Pancreas (tissue), 10 donors: ENCODE measurements at regions of chr3 and their contacts with region 1.

Region 1: DNA sequence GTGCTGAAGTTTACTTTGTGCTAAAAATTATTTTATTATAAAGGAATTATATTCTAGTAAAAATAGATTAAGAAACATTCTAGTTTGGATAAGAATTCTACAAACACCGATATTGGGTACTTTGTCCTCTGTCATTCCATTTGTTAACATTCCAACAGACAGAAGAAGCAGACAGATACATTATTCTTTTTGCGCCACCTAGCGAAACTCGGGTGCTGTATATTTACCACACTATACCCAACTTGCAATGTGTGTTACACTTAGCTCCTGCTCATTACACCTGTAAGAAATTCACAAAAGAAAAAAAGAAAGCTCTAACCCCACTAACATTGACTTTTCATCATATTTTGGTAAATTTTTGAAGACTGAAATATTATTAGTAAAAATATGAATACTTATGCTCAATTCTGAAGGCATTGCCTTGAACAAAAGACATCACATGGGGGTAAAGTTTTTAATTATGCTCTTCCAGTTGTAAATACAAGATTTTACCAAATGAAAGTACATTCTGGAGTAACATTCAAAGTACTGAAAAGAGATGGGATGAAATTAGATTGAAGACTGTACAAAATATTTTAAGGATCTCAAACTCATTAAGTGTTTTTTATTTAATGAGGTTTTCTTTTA is 136.5 kb upstream of the MLF1 start:
- DNase-seq: peak in 5 of 6 donors; percentile 30 to 64 (median 50)
- ATAC-seq: peak; percentile 77 to 95 (median 93)
- H3K4me3 ChIP-seq: no peak overlapping the region
- H3K27ac ChIP-seq: no peak overlapping the region
- H3K4me1 ChIP-seq: peaks cover 0 to 3% (median 0%) of the 10 kb centered on the region in 3 donors
- H3K27me3 ChIP-seq: no peaks in the 10 kb centered on the region
- CTCF ChIP-seq: peak in 3 of 4 donors; percentile 46 to 66 (median 56)

Region 2: DNA sequence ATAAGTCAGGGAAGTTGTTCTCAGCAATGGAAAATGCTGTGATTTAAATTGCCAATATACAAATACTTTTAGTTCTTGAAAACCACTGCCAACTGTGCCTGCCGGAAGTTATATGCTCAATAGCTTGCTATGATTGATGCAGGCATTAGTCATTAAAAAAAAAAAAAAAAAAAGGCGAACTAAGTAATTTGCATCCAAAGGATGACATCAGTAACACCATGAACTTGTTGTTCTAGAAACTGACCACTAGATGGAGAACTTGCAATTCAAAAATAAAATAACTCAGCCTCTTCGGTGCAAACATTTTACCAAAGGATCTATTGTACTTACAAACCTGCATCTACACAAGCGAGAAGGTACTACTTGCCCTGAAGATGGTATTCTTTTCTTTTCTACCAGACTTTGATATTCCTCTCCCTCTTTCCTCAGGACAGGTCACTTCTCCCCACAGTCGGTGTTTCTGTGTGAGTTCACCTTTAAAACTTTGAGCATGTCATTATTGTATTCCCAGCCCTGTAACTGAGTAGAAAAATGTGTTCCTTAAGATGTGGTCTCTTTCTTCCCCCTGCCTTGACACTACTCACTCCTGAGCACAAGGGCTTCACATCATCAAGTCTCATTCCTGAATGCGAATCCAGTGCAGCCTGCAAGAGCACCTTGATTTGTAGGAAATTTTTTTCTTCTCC is 816.3 kb before region 1 on chr3:
- intact Hi-C with region 1: loop called in 1 of 3 experiments (anchors 5 kb)
- DNase-seq: peak in 2 of 6 donors; percentile 24
- ATAC-seq: peak; percentile 81 to 89 (median 86)
- H3K4me3 ChIP-seq: no peak overlapping the region
- H3K27ac ChIP-seq: no peak overlapping the region
- H3K4me1 ChIP-seq: peaks cover 0 to 2% (median 0%) of the 10 kb centered on the region in 3 donors
- H3K27me3 ChIP-seq: no peaks in the 10 kb centered on the region
- CTCF ChIP-seq: peak; percentile 42 to 67 (median 56)